PC-3 (cell line): ENCODE measurements at regions of chr3 and their contacts with region 1.

Region 1: DNA sequence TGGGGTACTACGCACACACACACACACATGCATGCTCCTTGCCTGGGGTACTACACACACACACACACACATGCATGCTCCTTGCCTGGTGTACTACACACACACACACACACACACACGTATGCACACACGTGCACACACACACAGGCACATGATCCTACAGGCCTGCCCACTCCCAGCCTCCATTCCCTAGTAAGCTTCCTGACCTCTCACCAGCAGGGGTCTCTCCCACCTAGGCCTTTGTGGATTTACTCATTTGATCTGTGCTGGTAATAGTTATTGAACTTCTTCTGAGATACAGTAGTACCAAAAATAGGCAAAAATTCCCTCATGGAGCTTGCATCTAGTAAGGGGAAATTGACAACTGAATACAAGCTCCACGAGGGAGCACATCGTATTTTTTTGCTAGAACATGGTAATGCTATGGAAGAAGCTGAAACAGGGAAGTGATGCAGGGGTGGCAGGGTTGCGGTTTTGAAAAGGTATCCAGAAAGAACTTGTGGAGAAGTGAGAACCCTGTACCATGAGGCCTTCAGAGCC is 19.1 kb downstream of the TTC21A start:
- DNase-seq: peak; percentile 60
- ATAC-seq: peak; percentile 39
- H3K4me3 ChIP-seq: 0 out of 2 replicates have a peak overlapping the region, but pooled peaks have one; percentile 27
- H3K27ac ChIP-seq: peak overlapping the region; percentile 53
- H3K4me1 ChIP-seq: peaks cover 30% of the 10 kb centered on the region
- H3K27me3 ChIP-seq: no peaks in the 10 kb centered on the region
- CTCF ChIP-seq: peak; percentile 73

Region 2: GRCh38 chr3:39107388-39108199 is 19.0 kb before region 1 on chr3 and contains the starts of genes GORASP1 and TTC21A:
- CTCF ChIA-PET with region 1: no interaction called
- POLR2A ChIA-PET with region 1: no interaction called
- intact Hi-C with region 1: loop called (anchors 1 kb)
- DNase-seq: peak; percentile 86
- ATAC-seq: peak; percentile 86
- H3K4me3 ChIP-seq: peak within 1 kb of the TSS; percentile 94
- H3K27ac ChIP-seq: no peak within 1 kb of the TSS
- H3K4me1 ChIP-seq: peaks cover 24% of the 10 kb centered on the region
- H3K27me3 ChIP-seq: no peaks in the 10 kb centered on the region
- CTCF ChIP-seq: no peak
- total RNA-seq, gene GORASP1: 47.4 and 58.9 TPM in 2 replicates
- total RNA-seq, gene TTC21A: 1.2 TPM in 2 replicates

Region 3: DNA sequence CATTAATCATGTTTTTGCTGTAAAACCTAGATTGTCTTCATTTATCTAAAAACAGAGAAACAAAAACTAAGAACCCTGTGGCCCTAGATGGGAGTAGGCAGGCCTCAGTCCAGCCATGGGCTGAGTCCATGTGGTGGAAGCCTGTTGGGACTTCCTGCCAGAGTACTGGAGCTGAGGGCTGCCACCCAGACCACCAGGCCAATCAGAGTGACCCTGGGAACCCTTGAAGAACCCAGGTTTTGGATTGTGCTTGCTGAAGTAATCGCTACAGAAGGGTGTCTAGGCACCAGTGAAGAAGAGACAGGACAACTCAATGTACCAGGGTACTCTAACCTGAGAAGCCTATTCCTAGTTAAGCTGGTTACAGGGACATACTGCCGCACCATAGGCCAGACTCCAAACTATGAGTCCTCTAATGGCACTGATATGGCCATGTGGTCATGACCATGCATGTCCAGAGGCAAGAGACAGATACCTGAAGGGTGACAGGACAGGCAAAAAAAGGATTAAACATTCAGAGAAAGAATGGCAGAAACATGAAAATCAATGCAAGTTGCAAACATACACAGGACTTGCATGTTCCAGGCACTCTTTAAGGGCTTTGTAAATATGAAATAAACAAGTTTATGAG is 13.9 kb after region 1 on chr3:
- CTCF ChIA-PET with region 1: no interaction called
- POLR2A ChIA-PET with region 1: interaction called, 4 read pairs
- intact Hi-C with region 1: loop called (anchors 1 kb)
- DNase-seq: peak; percentile 28
- ATAC-seq: peak; percentile 7
- H3K4me3 ChIP-seq: no peak overlapping the region
- H3K27ac ChIP-seq: peak overlapping the region; percentile 61
- H3K4me1 ChIP-seq: peaks cover 33% of the 10 kb centered on the region
- H3K27me3 ChIP-seq: no peaks in the 10 kb centered on the region
- CTCF ChIP-seq: no peak

Region 4: DNA sequence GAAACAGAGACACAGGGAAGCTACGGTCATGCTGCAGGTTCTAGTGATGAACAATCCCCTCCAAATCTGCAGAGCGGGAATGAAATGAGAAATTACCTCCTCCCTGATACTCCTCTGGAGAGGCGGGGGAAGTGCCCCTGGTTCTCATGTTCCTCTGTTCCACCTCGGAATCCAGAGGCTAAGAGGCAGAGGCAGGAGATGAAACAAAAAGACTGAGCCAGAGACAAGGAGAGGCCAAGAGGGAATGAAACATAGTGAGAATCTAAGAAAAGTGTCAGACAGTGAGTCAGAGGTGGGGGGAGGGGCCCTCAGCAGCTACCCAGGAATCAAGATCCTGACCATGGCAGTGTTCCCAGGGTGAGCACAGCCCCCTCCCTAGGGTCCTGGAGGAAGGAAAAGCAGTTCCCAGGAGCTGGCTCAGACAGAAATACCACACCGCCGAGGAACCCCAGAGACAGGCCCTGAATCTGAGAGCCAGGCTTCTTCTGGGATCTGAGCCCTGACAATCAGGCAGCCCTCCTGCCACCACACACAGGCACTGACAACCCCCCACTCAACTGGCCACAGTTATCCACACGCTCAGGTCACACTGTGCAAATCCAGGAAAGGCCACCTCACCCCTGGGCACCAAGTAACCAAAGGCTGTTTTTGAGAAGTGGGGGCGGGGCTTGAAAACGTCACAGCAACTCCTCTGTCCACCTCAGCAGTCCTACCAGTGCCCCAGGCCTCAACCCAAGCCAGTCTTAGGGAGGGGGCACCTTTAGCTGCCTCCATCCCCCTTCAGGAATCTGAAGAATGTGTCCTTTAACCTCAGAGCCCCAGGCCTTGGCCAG is 24.4 kb after region 1 on chr3:
- CTCF ChIA-PET with region 1: interaction called, 3 read pairs
- POLR2A ChIA-PET with region 1: no interaction called
- intact Hi-C with region 1: loop called (anchors 1 kb)
- DNase-seq: peak; percentile 93
- ATAC-seq: peak; percentile 14
- H3K4me3 ChIP-seq: peak overlapping the region; percentile 82
- H3K27ac ChIP-seq: peak overlapping the region; percentile 90
- H3K4me1 ChIP-seq: peaks cover 62% of the 10 kb centered on the region
- H3K27me3 ChIP-seq: no peaks in the 10 kb centered on the region
- CTCF ChIP-seq: no peak

Region 5: GRCh38 chr3:39180546-39181346 is 54.1 kb after region 1 on chr3:
- CTCF ChIA-PET with region 1: interaction called, 3 read pairs
- POLR2A ChIA-PET with region 1: no interaction called
- intact Hi-C with region 1: loop called (anchors 1 kb)
- DNase-seq: peak; percentile 84
- ATAC-seq: peak; percentile 86
- H3K4me3 ChIP-seq: peak overlapping the region; percentile 65
- H3K27ac ChIP-seq: no peak overlapping the region
- H3K4me1 ChIP-seq: peaks cover 29% of the 10 kb centered on the region
- H3K27me3 ChIP-seq: no peaks in the 10 kb centered on the region
- CTCF ChIP-seq: no peak

Region 6: DNA sequence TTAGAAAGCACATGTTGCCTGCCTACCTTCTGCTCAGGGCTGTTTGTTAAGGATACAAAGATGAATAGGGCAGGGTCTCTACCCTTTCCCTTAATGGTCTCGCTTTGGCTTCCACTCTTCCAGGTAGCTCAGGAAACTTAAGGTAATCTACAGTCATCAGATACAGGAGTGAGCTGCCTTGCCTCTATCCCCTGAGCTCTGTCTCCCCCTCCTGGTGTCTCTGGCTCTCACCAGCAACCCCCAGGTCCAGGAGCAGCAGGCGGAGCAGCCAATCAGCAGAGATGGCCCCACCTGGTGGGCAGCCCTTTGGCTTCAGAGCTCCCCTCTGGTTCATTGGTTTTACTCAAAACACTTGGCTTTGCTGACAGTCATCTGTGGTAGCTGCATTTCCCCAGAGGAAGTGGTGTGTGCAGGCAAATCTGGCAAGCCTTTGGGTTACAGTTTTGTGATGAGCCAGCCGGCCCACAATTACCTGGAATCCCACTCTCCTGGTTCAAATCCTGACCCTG is 161.8 kb after region 1 on chr3:
- CTCF ChIA-PET with region 1: interaction called, 24 read pairs
- POLR2A ChIA-PET with region 1: no interaction called
- intact Hi-C with region 1: loop called (anchors 1 kb)
- DNase-seq: peak; percentile 89
- ATAC-seq: peak; percentile 93
- H3K4me3 ChIP-seq: no peak overlapping the region
- H3K27ac ChIP-seq: no peak overlapping the region
- H3K4me1 ChIP-seq: 0 out of 2 replicates have a peak, but pooled peaks cover 4% of the 10 kb centered on the region
- H3K27me3 ChIP-seq: no peaks in the 10 kb centered on the region
- CTCF ChIP-seq: peak; percentile 99

Region 7: GRCh38 chr3:39383045-39383880 is 256.7 kb after region 1 on chr3 and contains the start of gene SLC25A38:
- CTCF ChIA-PET with region 1: no interaction called
- POLR2A ChIA-PET with region 1: no interaction called
- intact Hi-C with region 1: loop called (anchors 10 kb)
- DNase-seq: peak; percentile 84
- ATAC-seq: peak; percentile 81
- H3K4me3 ChIP-seq: peak within 1 kb of the TSS; percentile 73
- H3K27ac ChIP-seq: peak within 1 kb of the TSS; percentile 66
- H3K4me1 ChIP-seq: peaks cover 23% of the 10 kb centered on the region
- H3K27me3 ChIP-seq: no peaks in the 10 kb centered on the region
- CTCF ChIP-seq: peak; percentile 28; the same call in 1 of the 2 replicates
- total RNA-seq, gene SLC25A38: 29.7 and 32.0 TPM in 2 replicates